IMR-90 (cell line): ENCODE measurements at regions of chr3 and their contacts with region 1.

Region 1: DNA sequence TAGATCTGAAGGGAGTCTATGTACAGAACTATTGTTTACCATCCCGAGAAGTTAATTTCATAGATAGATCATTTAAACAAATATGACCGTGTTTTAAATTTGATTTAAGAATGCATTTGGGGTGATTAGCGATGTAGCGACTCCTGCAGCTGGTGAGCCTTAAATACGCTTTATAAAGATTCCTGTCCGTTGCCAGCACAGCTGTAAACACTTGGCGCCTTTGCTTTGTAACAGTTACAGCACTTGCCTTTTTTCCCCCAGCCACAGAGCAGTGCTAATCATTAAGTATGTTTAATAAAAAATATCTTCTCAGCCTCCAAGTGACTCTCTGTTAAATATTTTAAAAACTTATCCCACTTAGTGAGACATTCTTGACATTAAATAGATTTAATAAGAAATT is 333.8 kb downstream of the FEZF2 start:
- DNase-seq: no peak
- ATAC-seq: no peak
- H3K4me3 ChIP-seq: no peak overlapping the region
- H3K27ac ChIP-seq: no peak overlapping the region
- H3K4me1 ChIP-seq: no peaks in the 10 kb centered on the region
- H3K27me3 ChIP-seq: no peaks in the 10 kb centered on the region
- CTCF ChIP-seq: no peak
- POLR2A ChIP-seq: no peak
- RAD21 ChIP-seq: no peak

Region 2: GRCh38 chr3:61985020-61985419 is 54.6 kb before region 1 on chr3:
- CTCF ChIA-PET with region 1: no interaction called
- POLR2A ChIA-PET with region 1: no interaction called
- dilution Hi-C with region 1: no loop called
- in situ Hi-C with region 1: no loop called
- intact Hi-C with region 1: no loop called
- DNase-seq: peak; percentile 82
- ATAC-seq: peak; percentile 40; the same call in 1 of the 2 replicates
- H3K4me3 ChIP-seq: no peak overlapping the region
- H3K27ac ChIP-seq: no peak overlapping the region; the same call in 1 of the 2 replicates
- H3K4me1 ChIP-seq: peaks cover 7% of the 10 kb centered on the region
- H3K27me3 ChIP-seq: no peaks in the 10 kb centered on the region
- CTCF ChIP-seq: no peak
- POLR2A ChIP-seq: no peak
- RAD21 ChIP-seq: no peak

Region 3: DNA sequence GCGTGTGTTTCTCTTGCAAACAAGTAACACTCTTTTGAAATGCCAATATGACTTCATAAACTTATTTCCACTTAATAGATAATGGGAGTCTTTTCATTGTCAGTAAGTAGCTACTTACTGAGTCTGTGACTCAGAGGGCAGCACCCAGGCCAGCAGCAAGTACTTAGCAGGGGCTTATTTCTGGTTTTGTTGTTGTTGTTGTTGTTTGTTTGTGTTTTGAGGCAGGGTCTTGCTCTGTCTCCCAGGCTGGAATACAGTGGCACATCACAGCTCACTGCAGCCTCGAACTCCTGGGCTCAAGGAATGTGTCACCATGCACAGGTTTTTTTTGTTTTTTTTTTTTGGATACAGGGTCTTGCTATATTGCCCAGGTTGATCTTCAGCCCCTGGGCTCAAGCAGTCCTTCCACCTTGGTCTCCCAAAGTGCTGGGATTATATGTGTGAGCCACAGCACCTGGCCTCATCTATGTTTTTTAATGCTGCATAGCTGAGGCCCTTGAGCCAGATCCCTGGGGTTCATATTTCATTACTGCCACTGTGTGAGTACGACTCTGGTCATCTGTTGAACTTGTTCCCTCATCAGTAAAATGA is 19.0 kb before region 1 on chr3:
- CTCF ChIA-PET with region 1: no interaction called
- POLR2A ChIA-PET with region 1: no interaction called
- dilution Hi-C with region 1: no loop called
- in situ Hi-C with region 1: no loop called
- intact Hi-C with region 1: no loop called
- DNase-seq: no peak
- ATAC-seq: no peak
- H3K4me3 ChIP-seq: no peak overlapping the region
- H3K27ac ChIP-seq: no peak overlapping the region
- H3K4me1 ChIP-seq: no peaks in the 10 kb centered on the region
- H3K27me3 ChIP-seq: no peaks in the 10 kb centered on the region
- CTCF ChIP-seq: no peak
- POLR2A ChIP-seq: no peak
- RAD21 ChIP-seq: no peak

Region 4: GRCh38 chr3:62084597-62084996 is 45.0 kb after region 1 on chr3:
- CTCF ChIA-PET with region 1: no interaction called
- POLR2A ChIA-PET with region 1: no interaction called
- dilution Hi-C with region 1: no loop called
- in situ Hi-C with region 1: no loop called
- intact Hi-C with region 1: no loop called
- DNase-seq: peak; percentile 7
- ATAC-seq: no peak
- H3K4me3 ChIP-seq: no peak overlapping the region
- H3K27ac ChIP-seq: no peak overlapping the region
- H3K4me1 ChIP-seq: 0 out of 2 replicates have a peak, but pooled peaks cover 1% of the 10 kb centered on the region
- H3K27me3 ChIP-seq: no peaks in the 10 kb centered on the region
- CTCF ChIP-seq: no peak
- POLR2A ChIP-seq: no peak
- RAD21 ChIP-seq: no peak

Region 5: DNA sequence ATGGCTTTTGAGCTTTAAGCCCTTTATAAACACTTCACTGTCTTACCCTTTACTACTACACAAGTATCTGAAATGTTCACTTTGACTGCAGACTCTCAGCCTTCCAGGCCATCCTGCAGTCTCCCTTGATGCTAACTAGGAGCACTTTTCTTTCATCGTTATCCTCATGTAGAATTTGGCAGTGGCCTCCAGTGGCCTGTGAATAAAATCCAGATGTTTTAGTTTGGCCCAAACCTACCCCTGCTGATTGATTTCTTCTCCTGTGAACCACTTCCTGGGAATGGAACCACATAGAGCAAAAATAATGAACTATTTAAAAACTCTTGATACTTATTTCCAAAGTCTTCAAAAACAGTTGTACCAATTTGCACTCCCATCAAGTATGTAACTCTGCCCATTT is 61.9 kb after region 1 on chr3:
- CTCF ChIA-PET with region 1: no interaction called
- POLR2A ChIA-PET with region 1: no interaction called
- dilution Hi-C with region 1: no loop called
- in situ Hi-C with region 1: no loop called
- intact Hi-C with region 1: loop called (anchors 5 kb)
- DNase-seq: no peak
- ATAC-seq: no peak
- H3K4me3 ChIP-seq: no peak overlapping the region
- H3K27ac ChIP-seq: no peak overlapping the region
- H3K4me1 ChIP-seq: peaks cover 1% of the 10 kb centered on the region; the same call in 1 of the 2 replicates
- H3K27me3 ChIP-seq: no peaks in the 10 kb centered on the region
- CTCF ChIP-seq: no peak
- POLR2A ChIP-seq: no peak
- RAD21 ChIP-seq: no peak